HEK293 (cell line): ENCODE measurements at regions of chr9 and their contacts with region 1.

Region 1: DNA sequence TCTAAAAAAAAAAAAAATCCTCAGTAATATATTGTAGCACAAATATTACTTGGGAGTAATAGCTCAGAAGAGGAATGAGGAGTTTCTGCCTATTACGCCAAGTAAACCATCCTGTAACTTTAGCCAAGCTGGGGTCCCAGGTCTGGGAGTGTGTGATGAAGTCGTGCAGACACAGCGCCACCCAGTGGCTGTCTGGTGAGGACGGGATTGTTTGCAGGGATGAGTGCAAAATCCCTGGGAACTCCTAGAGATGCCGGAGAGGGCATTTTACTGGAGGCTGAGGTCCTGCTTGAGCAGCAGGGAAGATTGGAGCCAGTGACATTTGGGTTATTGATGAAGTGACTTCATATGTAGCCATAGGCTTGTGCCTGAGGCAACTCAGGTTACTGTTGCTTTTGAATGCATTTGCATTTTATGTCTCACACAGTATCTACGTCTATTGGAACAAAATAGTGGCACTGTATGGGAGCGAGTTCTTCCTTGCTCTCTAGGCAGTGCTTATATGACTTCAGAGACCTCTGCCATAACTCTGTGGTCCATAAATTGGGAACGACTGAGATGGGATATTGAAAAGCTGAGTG is 72.8 kb downstream of the PSAT1 start:
- H3K4me3 ChIP-seq: no peak overlapping the region
- H3K27ac ChIP-seq: no peak overlapping the region
- H3K4me1 ChIP-seq: peaks cover 3% of the 10 kb centered on the region; the same call in 1 of the 2 replicates
- CTCF ChIP-seq: 0 out of 2 replicates have a peak, but pooled peaks have one; percentile 38

Region 2: DNA sequence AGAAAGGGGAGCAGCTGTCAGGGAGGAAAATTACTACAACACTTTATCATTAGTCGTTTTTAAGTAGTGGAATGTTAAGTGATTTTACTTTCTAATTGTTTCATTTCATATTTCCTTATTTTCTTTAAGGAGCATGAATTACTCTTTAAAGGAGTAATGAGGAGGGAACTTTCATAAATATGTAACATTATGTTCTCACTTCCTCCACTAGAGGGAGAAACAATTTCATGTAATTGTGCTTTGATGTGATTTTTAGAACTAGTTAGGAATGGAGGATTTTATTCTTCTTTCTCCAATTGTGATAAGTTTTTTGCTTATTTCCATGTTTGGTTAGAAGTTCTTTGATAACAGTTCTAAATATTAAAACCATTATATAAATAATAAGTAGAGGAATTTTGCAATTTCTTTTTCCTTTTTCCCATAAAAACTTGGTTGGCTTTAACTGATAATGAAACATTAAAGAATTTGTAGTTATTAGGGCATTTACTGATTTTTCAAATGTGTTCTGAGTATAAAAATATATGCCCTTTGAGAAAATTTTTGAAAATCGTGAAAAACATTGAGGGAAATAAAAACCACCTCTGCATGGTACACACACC is 108.2 kb before region 1 on chr9:
- CTCF ChIA-PET with region 1: interaction called, 16 read pairs
- POLR2A ChIA-PET with region 1: no interaction called
- H3K4me3 ChIP-seq: no peak overlapping the region
- H3K27ac ChIP-seq: no peak overlapping the region
- H3K4me1 ChIP-seq: no peaks in the 10 kb centered on the region
- CTCF ChIP-seq: no peak

Region 3: DNA sequence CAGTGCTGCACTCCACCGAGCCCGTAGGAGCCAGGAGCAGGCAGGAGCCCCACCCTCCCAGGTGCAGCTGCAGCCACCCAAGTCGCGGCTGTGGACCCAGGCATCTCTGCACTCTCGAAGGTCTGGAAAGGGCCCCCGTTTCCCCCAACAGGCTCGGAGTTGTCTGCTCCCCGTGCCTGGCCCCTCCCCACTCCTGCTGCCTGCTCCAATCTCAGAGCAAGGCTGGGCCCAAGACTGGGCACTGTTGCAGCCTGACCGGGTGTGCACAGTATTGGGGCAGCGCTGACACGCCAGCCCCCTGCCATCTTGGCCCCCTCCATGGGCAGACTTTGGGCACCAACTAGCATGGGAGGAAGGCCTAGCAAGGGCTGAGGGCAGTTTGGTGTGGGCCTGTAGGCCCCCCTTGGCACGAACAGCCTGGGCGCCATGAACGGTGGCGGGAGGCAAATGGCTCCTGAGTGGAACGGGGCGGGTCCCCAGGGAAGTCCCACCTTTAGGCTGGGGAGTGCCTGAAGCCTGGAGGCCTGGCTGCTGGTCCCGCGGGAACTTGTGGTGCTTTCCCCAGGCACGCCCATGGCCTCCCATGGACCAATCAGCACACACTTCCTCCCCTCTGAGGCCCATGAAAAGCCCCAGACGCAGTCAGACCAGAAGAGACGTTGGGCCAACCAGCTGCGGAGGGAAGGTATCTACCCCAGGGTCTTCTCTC is 12.4 kb before region 1 on chr9:
- CTCF ChIA-PET with region 1: interaction called, 21 read pairs
- POLR2A ChIA-PET with region 1: no interaction called
- H3K4me3 ChIP-seq: no peak overlapping the region
- H3K27ac ChIP-seq: no peak overlapping the region
- H3K4me1 ChIP-seq: no peaks in the 10 kb centered on the region
- CTCF ChIP-seq: no peak

Region 4: GRCh38 chr9:78383130-78383529 is 13.4 kb after region 1 on chr9:
- CTCF ChIA-PET with region 1: interaction called, 29 read pairs
- POLR2A ChIA-PET with region 1: no interaction called
- H3K4me3 ChIP-seq: no peak overlapping the region
- H3K27ac ChIP-seq: no peak overlapping the region
- H3K4me1 ChIP-seq: no peaks in the 10 kb centered on the region
- CTCF ChIP-seq: no peak